ENCODE measurements at regions of chr2 and their contacts with region 1.

Region 1: DNA sequence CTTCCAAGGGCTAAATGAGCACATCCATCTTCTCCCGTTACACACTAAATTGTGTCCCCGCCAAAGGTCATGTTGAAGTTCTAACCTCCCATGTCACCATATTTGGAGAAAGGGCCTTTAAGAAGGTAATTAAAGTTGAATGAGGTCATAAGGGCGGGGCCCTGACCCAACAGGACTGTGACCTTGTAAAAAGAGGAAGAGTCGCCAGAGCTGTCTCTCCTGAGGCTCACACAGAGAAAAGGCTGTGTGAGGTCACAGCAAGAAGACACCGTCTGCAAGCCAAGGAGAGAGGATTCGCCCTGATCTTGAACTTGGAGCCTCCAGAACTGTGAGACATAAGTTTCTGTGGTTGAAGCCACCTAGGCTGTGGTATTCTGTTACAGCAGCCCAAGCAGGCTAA is 24.1 kb downstream of the TRABD2A start:
- DNase-seq: no peak
- H3K4me3 ChIP-seq: no peak overlapping the region
- CTCF ChIP-seq: no peak

Region 2: DNA sequence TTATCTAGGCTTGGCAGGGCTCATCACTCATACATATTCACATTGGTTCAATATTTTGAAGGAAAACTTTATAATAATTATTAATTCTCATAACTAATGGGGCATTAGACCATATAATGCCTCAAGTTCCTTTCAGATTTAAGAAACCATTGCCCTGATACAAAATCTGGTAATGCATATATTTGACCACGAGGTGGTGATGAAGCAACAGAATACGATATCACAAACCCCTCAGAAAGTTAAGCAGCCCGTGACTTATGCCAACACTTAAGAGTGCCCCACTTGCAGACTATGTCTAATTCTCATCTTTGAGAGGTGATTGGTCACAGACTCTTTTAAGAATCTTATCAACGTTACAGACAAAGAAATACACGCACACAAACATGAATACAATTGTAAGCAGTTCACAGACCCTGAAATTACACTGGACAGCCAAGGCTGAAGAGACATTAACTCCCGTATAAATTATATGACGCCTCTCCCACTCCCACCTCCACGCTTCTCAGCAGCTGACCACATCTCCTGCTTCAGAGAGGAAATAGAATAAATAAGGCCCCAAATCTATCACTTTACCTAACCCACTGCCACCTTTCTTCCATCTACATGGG is 361.1 kb before region 1 on chr2:
- CTCF ChIA-PET with region 1: interaction called, 27 read pairs
- POLR2A ChIA-PET with region 1: no interaction called
- DNase-seq: no peak
- H3K4me3 ChIP-seq: no peak overlapping the region
- CTCF ChIP-seq: peak; percentile 43

Region 3: GRCh38 chr2:84526562-84526961 is 330.2 kb before region 1 on chr2:
- CTCF ChIA-PET with region 1: interaction called, 12 read pairs
- POLR2A ChIA-PET with region 1: no interaction called
- DNase-seq: no peak
- H3K4me3 ChIP-seq: no peak overlapping the region
- CTCF ChIP-seq: no peak

Region 4: DNA sequence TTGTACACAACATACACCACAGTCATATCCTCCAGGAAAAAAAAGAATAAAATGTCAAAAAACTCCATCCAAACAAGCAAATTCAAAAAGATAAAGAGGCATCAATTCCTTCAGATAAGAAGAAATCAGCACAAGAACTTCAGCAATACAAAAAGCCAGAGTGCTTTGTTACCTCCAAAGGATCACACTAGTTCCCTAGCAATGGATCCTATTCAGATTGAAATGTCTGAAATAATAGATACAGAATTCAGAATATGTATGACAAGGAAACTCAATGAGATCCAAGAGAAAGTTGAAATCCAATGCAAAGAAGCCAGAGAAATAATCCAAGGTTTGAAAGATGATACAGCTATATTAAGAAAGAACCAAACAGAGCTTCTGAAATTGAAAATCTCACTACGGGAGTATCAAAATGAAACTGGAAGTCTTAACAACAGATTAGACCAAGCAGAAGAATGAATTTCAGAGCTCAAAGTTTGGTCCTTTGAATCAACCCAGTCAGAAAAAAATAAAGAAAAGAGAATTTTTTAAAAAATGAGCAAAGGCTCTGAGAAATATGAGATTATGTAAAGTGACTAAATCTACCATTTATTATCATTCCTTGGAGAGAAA is 56.5 kb before region 1 on chr2:
- CTCF ChIA-PET with region 1: no interaction called
- POLR2A ChIA-PET with region 1: no interaction called
- DNase-seq: no peak
- H3K4me3 ChIP-seq: no peak overlapping the region
- CTCF ChIP-seq: no peak

Region 5: DNA sequence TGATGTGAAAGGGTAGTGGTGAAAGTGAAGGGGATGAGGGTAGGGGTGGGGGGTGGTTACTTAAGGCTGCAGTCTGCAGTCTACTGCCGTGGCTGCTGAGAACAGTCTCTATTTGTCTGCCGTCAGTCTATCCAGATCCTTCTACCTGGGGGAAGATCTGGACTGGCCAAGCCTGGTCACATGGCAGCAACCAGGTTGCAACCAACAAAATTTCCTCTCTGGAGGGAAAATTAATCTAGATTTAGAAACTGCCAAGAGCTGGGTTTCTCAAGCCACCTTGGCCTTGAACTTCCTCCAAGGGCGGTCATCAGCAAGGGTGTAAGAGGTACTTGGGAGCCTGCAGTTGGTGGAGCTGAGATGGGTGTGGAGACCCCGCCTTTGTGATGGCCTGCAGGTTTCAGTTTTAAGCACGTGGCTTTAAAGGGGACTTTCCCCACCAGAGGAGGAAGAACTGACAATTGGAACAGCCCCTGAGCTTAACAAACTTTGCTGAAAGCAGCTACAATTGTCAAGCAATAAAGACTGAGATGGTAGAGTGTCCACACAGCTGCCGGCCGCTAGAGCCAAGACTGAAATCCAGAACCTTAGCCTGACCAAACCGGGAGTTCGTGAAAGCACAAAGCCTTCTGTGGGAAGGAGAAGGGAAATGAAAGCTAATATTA is 82.8 kb after region 1 on chr2:
- CTCF ChIA-PET with region 1: no interaction called
- POLR2A ChIA-PET with region 1: no interaction called
- DNase-seq: no peak
- H3K4me3 ChIP-seq: no peak overlapping the region
- CTCF ChIP-seq: no peak

Region 6: DNA sequence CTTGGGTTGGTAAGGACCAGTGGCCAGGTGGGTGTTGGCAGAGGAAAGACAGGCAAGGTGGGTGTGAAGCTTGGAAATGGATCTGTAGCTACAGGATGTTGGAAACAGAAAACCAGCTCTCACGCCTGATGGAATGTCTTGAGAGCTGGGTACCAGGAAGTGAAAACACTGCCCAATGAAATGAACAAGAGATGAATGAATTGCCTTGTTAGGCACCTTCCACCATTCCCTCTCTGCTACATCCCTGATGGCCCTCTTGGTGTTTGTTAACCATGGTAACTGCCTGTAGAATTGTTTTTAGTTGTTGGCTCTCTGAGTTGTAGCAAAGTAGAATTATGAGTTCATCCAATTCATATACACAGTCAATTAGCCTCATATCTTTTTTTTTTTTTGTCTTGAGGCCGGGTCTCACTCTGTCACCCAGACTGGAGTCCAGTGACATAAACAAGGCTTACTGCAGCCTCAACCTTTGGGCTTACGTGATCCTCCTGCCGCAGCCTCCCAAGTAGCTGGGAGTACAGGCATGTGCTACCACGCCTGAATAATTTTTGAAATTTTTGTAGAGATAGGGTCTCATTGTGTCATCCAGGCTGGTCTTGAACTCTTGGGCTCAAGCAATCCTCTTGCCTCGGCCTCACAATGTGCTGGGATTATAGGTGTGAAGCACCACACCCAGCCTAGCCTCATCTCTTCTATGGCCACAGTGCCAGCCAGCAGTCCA is 123.6 kb after region 1 on chr2:
- CTCF ChIA-PET with region 1: no interaction called
- POLR2A ChIA-PET with region 1: no interaction called
- DNase-seq: no peak
- H3K4me3 ChIP-seq: no peak overlapping the region
- CTCF ChIP-seq: no peak